ENCODE measurements at regions of chr10 and their contacts with region 1.

Region 1: DNA sequence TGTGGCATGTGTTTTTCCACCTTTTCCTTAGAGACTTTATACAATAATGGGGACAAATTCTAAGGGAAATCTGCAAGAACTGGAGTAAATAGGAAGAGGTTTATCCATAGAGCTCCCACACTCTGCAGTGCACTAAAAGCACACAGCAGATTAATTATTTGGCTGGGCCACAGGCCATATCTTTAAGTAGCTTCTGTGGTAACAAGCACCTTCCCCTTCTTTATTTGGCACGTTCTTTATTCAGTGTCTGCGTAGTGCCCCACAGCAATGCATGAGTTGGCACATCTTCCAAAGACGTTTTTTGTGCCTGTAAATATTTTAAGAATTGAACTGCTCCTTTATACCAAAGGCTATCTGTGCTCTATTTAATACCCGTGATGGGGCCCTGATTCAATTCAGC is 104.9 kb upstream of the MBL2 start:
- DNase-seq: peak; percentile 54
- H3K4me3 Mint-ChIP-seq: no peak overlapping the region
- H3K27ac Mint-ChIP-seq: no peak overlapping the region
- H3K4me1 Mint-ChIP-seq: peaks cover 36% of the 10 kb centered on the region
- H3K27me3 Mint-ChIP-seq: no peaks in the 10 kb centered on the region
- CTCF ChIP-seq: no peak

Region 2: DNA sequence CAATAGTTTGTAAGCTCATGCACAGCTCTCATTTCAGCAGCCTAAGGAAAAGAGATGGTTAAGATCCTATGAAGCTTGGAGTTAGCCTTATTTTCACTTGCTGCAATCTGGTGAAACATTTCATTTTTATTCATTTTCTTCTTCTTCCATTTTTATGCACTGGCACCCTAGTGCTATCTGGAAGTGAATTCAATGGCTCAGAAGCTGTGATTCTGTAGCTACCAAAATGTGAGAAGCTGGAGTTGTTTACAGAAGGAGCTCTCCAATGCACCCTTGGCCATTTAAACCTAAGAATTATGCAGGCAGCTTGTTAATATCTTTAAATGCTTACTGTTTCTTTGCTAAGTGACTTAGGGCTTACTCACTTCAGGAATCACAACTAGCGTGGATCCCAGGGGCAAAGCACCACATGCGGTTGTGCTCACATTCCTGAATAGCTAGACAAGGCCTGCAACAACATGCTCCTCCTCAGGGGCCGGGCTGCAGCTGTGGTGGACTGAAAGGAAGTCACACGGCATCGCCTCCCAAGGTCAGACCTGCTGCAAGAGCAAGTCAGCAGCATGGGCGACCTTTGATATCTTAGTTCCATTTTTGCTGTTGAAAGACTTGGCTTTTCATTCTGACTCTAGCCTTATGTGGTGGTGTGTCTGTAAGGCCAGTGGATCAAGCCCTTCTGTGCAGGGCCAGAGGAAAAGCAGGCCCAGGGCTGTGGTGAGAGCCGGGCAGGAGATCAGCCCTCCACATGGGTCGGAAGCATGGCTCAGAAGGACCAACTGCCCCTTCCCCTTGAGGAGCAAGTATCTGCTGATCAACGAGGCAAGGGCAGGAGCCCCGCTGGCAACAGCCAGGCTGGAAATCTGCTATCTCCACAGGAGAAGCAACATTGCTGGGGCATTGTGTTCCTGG is 13.0 kb before region 1 on chr10:
- CTCF ChIA-PET with region 1: interaction called, 11 read pairs
- POLR2A ChIA-PET with region 1: interaction called, 9 read pairs
- intact Hi-C with region 1: no loop called
- DNase-seq: peak; percentile 92
- H3K4me3 Mint-ChIP-seq: no peak overlapping the region
- H3K27ac Mint-ChIP-seq: peak overlapping the region; percentile 65
- H3K4me1 Mint-ChIP-seq: peaks cover 19% of the 10 kb centered on the region
- H3K27me3 Mint-ChIP-seq: no peaks in the 10 kb centered on the region
- CTCF ChIP-seq: no peak

Region 3: DNA sequence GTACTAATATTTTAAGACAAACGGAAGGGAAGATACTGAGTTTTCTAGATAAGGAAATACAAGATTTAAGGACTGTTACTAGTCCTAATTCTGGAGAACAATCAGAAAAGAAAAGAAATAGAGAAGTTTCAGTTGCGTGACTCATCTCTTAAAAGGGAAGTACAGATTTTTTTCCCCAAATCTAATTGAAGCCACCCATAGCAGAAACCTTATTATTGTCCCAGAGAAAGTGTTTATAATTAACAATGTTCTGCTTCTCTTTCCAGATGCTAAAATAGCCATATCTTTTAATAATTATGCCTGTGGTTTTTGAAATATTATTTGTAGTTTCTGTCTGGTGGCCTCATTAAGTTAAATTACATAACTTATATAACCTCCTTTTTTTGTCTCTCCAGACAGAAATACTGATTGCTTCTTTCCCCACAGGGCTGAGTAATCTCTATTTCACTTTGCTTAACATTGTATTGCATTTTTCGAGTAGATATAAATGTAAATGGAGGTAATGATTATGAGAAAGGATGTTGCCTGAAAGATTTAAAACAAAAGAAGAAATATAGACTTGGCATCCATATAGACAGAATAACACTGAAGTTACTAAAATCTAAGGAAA is 135.9 kb after region 1 on chr10:
- CTCF ChIA-PET with region 1: no interaction called
- POLR2A ChIA-PET with region 1: no interaction called
- intact Hi-C with region 1: no loop called
- DNase-seq: no peak
- H3K4me3 Mint-ChIP-seq: no peak overlapping the region
- H3K27ac Mint-ChIP-seq: no peak overlapping the region
- H3K4me1 Mint-ChIP-seq: no peaks in the 10 kb centered on the region
- H3K27me3 Mint-ChIP-seq: no peaks in the 10 kb centered on the region
- CTCF ChIP-seq: no peak

Measured in MCF 10A (cell line).